ENCODE measurements at regions of chr16 and their contacts with region 1.

Region 1: DNA sequence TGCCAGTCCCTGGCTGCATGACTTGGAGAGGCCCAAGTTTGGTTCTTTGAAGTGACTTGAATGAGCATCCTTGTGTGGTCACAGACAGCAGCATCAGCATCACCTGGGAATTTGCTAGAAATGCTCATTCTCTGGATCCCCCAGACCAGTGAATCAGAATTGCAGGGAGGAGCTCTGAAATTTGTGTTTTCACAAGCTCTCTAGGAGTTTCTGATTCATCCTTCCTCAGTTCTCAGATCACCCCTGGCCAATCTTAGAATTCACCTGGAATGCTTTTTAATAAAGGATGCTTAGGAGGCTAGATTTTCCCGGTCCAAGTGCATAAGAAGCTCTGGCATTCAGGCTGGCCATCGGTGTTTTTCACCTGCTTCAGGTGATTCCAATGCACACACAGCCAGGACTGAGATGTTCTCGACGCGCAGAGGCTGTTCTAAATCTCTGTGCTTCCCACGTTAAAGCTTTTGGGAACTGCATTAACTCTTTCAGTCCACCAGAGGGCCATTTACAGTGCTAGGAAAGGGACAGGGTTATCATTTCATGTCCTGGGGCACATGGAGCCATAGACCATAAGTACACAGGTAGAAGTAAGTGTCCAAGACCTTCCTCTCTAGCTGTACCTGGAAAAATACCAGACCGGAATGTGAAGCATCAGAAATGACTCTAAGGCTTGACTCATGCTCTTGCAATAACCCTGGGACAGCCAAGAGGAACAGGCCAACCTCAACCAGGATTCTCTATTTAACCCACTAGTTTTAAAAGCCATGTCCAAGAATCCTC is 85.7 kb upstream of the XYLT1 start:
- DNase-seq: peak in 1 of 2 experiments; percentile 2
- H3K4me3 ChIP-seq: no peak overlapping the region
- H3K27ac ChIP-seq: no peak overlapping the region
- H3K4me1 ChIP-seq: no peaks in the 10 kb centered on the region
- H3K27me3 ChIP-seq: no peaks in the 10 kb centered on the region
- CTCF ChIP-seq: peak; percentile 11 to 79 (median 77)
- EP300 ChIP-seq: no peak
- POLR2A ChIP-seq: no peak
- RAD21 ChIP-seq: peak; percentile 69 to 80

Region 2: GRCh38 chr16:17467923-17468540 is 88.4 kb before region 1 on chr16:
- CTCF ChIA-PET with region 1: no interaction called
- POLR2A ChIA-PET with region 1: no interaction called
- DNase-seq: peak in 1 of 2 experiments; percentile 72
- H3K4me3 ChIP-seq: peak overlapping the region in 1 of 4 experiments; percentile 36; a peak in 1 of 8 replicates
- H3K27ac ChIP-seq: no peak overlapping the region
- H3K4me1 ChIP-seq: peaks cover 13 to 35% (median 21%) of the 10 kb centered on the region in 4 experiments; a peak in 6 of 7 replicates
- H3K27me3 ChIP-seq: peaks cover 0 to 28% (median 15%) of the 10 kb centered on the region in 4 experiments; a peak in 5 of 7 replicates
- CTCF ChIP-seq: peak; percentile 80 to 90 (median 83)
- EP300 ChIP-seq: no peak
- POLR2A ChIP-seq: no peak
- RAD21 ChIP-seq: peak; percentile 90 to 97

Region 3: DNA sequence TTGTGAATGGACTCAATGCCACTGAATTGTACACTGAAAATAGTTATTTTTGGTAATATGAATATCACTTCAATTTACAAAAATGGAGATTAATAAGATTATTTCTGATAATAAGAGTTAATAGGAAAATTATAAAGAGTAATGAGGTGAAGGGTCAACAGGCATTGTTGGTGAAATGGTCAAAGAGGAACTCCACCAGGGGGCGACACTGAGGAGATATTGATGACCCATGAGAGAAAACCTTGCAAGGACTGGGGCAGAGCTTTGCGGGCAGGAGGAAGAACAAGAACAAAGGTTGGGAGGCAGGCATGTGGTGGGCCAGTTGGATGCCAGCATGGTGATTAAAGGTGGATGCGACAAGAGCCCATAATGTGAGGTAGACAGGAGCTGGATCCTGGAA is 11.7 kb before region 1 on chr16:
- CTCF ChIA-PET with region 1: interaction called, 41 read pairs
- POLR2A ChIA-PET with region 1: no interaction called
- DNase-seq: peak; percentile 17 to 86
- H3K4me3 ChIP-seq: no peak overlapping the region
- H3K27ac ChIP-seq: no peak overlapping the region
- H3K4me1 ChIP-seq: no peaks in the 10 kb centered on the region
- H3K27me3 ChIP-seq: no peaks in the 10 kb centered on the region
- CTCF ChIP-seq: peak; percentile 20 to 64 (median 60)
- EP300 ChIP-seq: no peak
- POLR2A ChIP-seq: no peak
- RAD21 ChIP-seq: peak; percentile 50 to 69

Region 4: DNA sequence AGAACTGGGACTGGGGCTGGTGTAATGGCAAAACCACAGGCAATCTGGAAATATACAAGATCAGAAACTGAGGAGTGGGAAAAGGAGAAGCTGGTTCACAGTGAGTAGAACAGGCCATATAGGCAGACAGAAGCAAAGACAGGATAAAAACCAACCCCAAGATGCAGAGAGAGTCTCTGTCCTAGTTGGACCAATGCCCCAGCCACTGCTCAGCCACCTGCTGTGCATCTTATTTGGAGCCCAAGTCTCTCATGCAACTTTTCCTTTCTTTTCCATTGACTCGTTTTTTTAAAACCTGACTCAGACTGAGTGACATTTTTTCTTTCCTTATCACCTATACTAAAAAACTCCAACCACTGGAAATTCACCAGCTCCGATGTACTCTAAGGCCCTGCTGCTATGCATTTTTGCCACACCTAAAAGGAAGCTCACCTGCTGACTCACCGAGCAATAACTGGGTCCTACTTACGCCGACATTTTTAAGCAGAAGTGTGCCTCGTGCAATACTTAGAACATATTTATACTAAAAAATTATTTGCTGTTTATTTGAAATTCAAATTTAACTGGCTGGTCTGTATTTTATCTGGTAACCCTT is 15.1 kb after region 1 on chr16:
- CTCF ChIA-PET with region 1: interaction called, 19 read pairs
- POLR2A ChIA-PET with region 1: no interaction called
- DNase-seq: no peak
- H3K4me3 ChIP-seq: no peak overlapping the region
- H3K27ac ChIP-seq: no peak overlapping the region
- H3K4me1 ChIP-seq: no peaks in the 10 kb centered on the region
- H3K27me3 ChIP-seq: no peaks in the 10 kb centered on the region
- CTCF ChIP-seq: no peak
- EP300 ChIP-seq: no peak
- POLR2A ChIP-seq: no peak
- RAD21 ChIP-seq: no peak

Region 5: GRCh38 chr16:17578921-17579874 is 22.7 kb after region 1 on chr16:
- CTCF ChIA-PET with region 1: interaction called, 42 read pairs
- POLR2A ChIA-PET with region 1: interaction called, 4 read pairs
- DNase-seq: peak; percentile 74 to 90
- H3K4me3 ChIP-seq: no peak overlapping the region
- H3K27ac ChIP-seq: no peak overlapping the region
- H3K4me1 ChIP-seq: 0 out of 7 replicates have a peak, but pooled peaks cover 0 to 4% (median 0%) of the 10 kb centered on the region in 4 experiments
- H3K27me3 ChIP-seq: no peaks in the 10 kb centered on the region
- CTCF ChIP-seq: peak; percentile 67 to 95 (median 84)
- EP300 ChIP-seq: no peak
- POLR2A ChIP-seq: no peak
- RAD21 ChIP-seq: peak; percentile 76 to 84

Region 6: DNA sequence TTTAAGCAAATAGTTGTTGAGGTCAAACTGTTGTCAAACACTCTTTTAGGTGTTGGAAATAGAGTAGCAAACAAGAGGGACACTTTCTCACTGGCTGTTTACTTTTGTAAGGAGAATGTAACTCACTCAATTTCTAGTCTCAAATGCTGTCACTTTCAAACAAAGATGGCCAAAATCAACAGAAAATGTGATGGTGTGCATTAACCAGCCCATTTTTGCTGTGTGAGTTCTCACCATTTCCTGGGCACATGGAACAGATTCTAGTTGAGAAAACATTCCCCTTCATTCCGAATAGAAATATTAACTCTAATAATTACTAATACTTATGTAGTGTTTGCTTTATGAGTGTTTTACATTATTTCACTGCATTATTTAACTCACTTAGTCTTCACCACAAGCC is 42.5 kb after region 1 on chr16:
- CTCF ChIA-PET with region 1: no interaction called
- POLR2A ChIA-PET with region 1: no interaction called
- DNase-seq: no peak
- H3K4me3 ChIP-seq: no peak overlapping the region
- H3K27ac ChIP-seq: no peak overlapping the region
- H3K4me1 ChIP-seq: no peaks in the 10 kb centered on the region
- H3K27me3 ChIP-seq: no peaks in the 10 kb centered on the region
- CTCF ChIP-seq: no peak
- EP300 ChIP-seq: no peak
- POLR2A ChIP-seq: no peak
- RAD21 ChIP-seq: no peak

Region 7: DNA sequence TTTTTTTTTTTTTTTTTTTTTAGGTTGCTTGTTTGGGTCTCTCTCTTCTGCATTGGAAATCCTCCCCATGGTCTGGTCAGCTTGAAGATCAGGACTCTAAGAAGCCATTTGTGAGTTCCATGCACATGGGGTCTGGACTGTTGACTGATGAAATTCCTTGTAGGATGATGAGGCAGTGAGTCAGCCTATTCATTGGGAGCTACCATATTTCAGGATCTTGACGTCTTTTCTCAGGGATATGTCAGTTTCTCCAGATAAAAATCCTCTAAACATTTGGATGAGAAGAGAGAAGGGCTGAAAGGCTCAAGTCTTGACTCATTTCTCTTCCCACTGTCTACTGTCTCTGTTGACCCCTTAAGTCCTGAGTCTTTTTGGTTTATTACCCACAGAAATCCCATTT is 247.2 kb after region 1 on chr16:
- CTCF ChIA-PET with region 1: no interaction called
- POLR2A ChIA-PET with region 1: no interaction called
- DNase-seq: no peak
- H3K4me3 ChIP-seq: no peak overlapping the region
- H3K27ac ChIP-seq: no peak overlapping the region
- H3K4me1 ChIP-seq: peaks cover 0 to 7% (median 2%) of the 10 kb centered on the region in 4 experiments; a peak in 3 of 7 replicates
- H3K27me3 ChIP-seq: no peaks in the 10 kb centered on the region
- CTCF ChIP-seq: no peak
- EP300 ChIP-seq: no peak
- POLR2A ChIP-seq: no peak
- RAD21 ChIP-seq: no peak

Measured in H1 (cell line).